GM12878 (cell line): ENCODE measurements at regions of chr13 and their contacts with region 1.

Region 1: DNA sequence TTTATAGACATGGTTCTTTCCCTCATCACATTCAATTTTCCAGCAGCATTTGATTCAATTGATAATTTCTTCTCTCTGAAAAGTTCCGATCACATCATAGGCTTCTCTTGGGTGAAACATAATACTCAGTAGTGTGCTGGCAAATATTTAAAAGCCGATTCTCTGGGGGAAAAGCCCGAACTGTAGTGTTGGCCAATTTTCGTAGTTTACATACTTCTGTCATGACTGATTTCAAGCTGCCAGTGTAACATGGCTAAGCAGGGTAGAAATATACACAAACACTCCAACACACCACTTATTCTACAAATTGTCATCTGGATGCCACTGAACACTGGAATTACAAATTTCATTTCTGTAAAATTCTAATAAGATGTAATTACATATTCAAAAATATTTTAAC is 56.1 kb upstream of the FREM2 start:
- DNase-seq: no peak
- ATAC-seq: no peak
- H3K4me3 ChIP-seq: no peak overlapping the region
- H3K27ac ChIP-seq: no peak overlapping the region
- H3K4me1 ChIP-seq: no peaks in the 10 kb centered on the region
- H3K27me3 ChIP-seq: no peaks in the 10 kb centered on the region
- CTCF ChIP-seq: no peak
- EP300 ChIP-seq: no peak
- POLR2A ChIP-seq: no peak
- RAD21 ChIP-seq: no peak

Region 2: GRCh38 chr13:38607136-38607535 is 23.6 kb before region 1 on chr13:
- CTCF ChIA-PET with region 1: no interaction called
- POLR2A ChIA-PET with region 1: no interaction called
- RAD21 ChIA-PET with region 1: no interaction called
- SMC1A ChIA-PET with region 1: no interaction called
- in situ Hi-C with region 1: no loop called
- intact Hi-C with region 1: loop called (anchors 2 kb)
- DNase-seq: no peak
- ATAC-seq: no peak
- H3K4me3 ChIP-seq: no peak overlapping the region
- H3K27ac ChIP-seq: no peak overlapping the region
- H3K4me1 ChIP-seq: no peaks in the 10 kb centered on the region
- H3K27me3 ChIP-seq: no peaks in the 10 kb centered on the region; a peak in 1 of 4 replicates
- CTCF ChIP-seq: no peak
- EP300 ChIP-seq: no peak
- POLR2A ChIP-seq: no peak
- RAD21 ChIP-seq: no peak